ENCODE measurements at regions of chr2 and their contacts with region 1.

Region 1: DNA sequence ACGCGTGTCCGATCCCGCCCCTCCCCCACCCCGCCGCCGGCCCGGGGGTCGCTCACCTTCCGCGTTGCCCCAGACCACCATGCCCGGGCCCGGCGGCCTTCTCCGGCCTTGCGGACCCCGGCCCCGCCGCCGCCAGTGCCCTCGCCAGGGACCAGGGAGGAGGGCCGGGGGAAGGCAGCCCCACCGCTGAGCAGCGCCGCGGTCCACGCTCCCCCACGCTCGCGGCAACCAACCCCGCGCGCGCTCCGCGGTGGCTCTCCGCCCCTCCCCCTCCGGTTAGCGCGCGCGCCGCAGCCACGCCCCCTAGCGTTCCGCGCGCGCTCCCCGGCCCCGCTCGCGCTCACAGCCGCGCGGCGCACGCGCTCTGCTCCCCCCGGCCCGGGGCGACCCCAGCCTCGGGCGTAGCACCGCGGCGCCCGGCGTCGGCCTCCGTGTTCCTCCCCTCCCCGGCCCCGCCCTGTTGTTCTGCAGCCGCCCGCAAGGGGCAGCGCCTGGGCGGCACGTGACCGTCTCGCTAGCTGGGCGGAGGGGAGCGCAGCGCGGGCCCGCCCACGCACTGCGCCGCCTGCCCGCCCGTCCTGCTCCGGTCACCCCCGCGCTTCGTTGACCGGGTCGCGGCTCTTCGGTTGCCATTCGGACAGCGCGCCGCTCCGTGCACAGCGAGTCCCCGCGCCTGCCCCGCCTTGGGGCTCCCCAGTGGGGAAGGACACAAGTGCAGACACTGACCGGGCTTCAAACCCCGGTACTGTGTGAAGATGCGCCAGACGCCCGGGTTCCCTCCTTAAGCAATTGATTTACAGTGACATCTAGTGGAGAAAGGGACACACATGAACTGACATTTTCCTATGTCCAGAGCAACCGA is at the start of gene REV1:
- DNase-seq: peak; percentile 94
- ATAC-seq: peak; percentile 71
- H3K4me3 ChIP-seq: peak within 1 kb of the TSS; percentile 86
- H3K27ac ChIP-seq: peak within 1 kb of the TSS; percentile 66
- H3K4me1 ChIP-seq: peaks cover 14% of the 10 kb centered on the region
- H3K27me3 ChIP-seq: no peaks in the 10 kb centered on the region
- CTCF ChIP-seq: peak; percentile 77
- total RNA-seq, gene REV1: 17.9 and 29.0 TPM in 2 replicates

Region 2: DNA sequence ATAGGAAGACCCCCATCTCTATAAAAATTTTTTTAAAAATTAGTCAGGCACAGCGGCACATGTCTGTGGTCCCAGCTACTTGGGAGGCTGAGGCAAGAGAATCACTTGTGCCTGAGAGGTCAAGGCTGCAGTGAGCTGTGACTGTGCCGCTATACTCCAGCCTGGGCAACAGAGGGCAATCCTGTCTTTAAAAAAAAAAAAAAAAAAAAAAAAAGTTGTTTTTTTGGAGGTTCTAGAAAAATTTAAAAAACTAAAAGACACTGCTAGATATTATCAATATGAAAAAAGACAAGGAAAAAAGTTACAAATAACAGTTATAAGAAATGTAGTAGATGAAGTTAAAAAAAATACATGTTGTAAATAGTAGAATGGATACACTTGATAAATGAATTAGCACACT is 404.6 kb before region 1 on chr2:
- CTCF ChIA-PET with region 1: no interaction called
- POLR2A ChIA-PET with region 1: no interaction called
- intact Hi-C with region 1: loop called (anchors 10 kb)
- DNase-seq: peak; percentile 24
- ATAC-seq: peak; percentile 50; the same call in 1 of the 2 replicates
- H3K4me3 ChIP-seq: no peak overlapping the region
- H3K27ac ChIP-seq: no peak overlapping the region
- H3K4me1 ChIP-seq: no peaks in the 10 kb centered on the region
- H3K27me3 ChIP-seq: no peaks in the 10 kb centered on the region
- CTCF ChIP-seq: peak; percentile 56

Region 3: DNA sequence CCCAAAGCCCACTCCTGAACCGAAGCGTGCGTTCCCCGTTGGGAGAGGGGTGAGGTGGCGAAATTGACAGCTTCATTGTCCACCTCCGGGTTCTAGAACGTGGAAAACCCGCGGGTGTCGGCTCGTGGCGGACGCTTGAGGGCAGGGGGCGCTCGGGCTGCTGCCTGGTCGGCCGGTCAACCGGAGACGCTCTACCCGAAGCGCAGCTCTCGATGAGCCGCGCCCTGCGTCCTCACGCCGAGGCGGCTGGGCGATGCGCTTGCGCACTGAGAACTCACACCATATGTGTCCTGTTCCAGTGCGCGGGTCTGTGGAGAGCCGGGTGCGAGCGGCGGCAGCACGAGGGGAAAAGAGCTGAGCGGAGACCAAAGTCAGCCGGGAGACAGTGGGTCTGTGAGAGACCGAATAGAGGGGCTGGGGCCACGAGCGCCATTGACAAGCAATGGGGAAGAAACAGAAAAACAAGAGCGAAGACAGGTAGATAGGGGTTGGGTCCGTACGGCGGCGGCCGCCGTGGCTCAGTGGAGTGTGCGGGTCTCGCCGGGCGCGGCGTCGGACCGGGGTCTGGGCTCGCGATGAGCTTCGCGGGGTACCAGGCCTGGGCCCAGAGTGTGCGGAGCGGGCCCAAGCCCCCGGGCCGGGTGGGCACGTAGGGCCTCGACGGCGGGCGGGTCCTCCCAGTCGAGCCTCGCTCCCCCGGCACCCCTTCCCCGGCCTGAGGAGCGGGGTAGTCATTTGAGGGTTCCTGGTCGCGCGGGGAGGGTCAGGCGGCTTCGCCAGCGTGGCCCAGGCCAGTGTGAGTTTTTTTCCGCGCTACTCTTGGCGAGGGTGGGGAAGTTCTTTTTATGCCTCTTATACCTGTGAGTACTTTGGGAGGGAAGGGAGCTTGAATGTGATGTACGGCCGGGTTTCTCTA is 152.6 kb before region 1 on chr2 and contains the start of gene EIF5B:
- CTCF ChIA-PET with region 1: interaction called, 4 read pairs
- POLR2A ChIA-PET with region 1: no interaction called
- intact Hi-C with region 1: loop called (anchors 1 kb)
- DNase-seq: peak; percentile 98
- ATAC-seq: peak; percentile 78
- H3K4me3 ChIP-seq: peak within 1 kb of the TSS; percentile 81
- H3K27ac ChIP-seq: peak within 1 kb of the TSS; percentile 73
- H3K4me1 ChIP-seq: peaks cover 34% of the 10 kb centered on the region
- H3K27me3 ChIP-seq: no peaks in the 10 kb centered on the region
- CTCF ChIP-seq: peak; percentile 83
- total RNA-seq, gene EIF5B: 35.7 and 35.9 TPM in 2 replicates

Region 4: DNA sequence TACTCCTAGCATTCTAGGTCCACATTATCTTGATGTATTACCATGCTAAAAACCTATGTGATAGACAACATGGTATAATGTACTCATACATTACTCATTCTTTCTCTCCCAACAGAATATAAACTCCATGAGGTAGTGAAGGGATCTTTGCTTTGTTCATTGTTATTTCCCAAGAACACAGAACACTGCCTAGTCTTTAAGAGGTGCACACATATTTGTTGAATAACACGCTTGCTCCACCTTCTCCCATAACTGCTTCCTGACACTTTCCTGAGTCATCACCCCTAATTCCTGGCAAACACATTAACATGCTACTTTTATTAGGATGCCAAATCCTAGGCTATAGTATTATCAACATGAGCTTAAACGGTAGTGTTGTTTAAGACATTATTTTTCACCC is 41.4 kb before region 1 on chr2:
- CTCF ChIA-PET with region 1: no interaction called
- POLR2A ChIA-PET with region 1: no interaction called
- intact Hi-C with region 1: loop called (anchors 2 kb)
- DNase-seq: peak; percentile 91
- ATAC-seq: peak; percentile 97
- H3K4me3 ChIP-seq: no peak overlapping the region
- H3K27ac ChIP-seq: peak overlapping the region; percentile 84
- H3K4me1 ChIP-seq: peaks cover 15% of the 10 kb centered on the region
- H3K27me3 ChIP-seq: no peaks in the 10 kb centered on the region
- CTCF ChIP-seq: no peak

Region 5: DNA sequence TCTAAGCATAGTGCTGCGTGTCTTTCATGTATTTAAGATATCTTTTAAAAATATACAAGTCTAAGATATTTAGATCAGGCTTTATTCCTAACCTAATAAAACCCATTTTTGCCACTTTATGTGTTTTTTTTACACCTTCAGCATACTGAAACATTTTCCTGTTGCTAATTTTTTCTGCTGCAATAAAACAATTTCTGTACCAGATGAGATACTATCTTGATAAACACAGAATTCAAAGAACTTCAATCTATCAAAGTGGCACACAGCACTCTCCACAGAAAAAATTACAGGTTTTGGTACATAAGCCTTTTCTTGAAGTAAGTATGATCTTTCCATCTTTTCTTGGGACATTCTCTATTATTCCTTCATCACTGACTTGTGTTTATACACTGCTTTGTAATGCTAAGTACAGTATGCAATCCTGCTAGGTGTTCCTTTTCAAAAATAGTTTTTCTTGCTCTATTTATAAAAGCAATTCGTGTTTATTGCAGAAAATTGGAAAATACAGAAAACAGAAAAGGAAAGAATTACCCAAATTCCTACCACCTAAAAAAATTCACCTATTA is 16.4 kb before region 1 on chr2:
- CTCF ChIA-PET with region 1: no interaction called
- POLR2A ChIA-PET with region 1: no interaction called
- intact Hi-C with region 1: loop called (anchors 2 kb)
- DNase-seq: no peak
- ATAC-seq: no peak
- H3K4me3 ChIP-seq: no peak overlapping the region
- H3K27ac ChIP-seq: peak overlapping the region; percentile 74
- H3K4me1 ChIP-seq: peaks cover 47% of the 10 kb centered on the region
- H3K27me3 ChIP-seq: no peaks in the 10 kb centered on the region
- CTCF ChIP-seq: no peak

Measured in PC-3 (cell line).